Common myeloid progenitor, CD34-positive (primary cell): ENCODE measurements at regions of chr4 and their contacts with region 1.

Region 1: GRCh38 chr4:153643406-153644383 is 40.4 kb upstream of the TLR2 start:
- DNase-seq: peak; percentile 44 to 82 (median 72)
- H3K4me3 ChIP-seq: no peak overlapping the region
- H3K27ac ChIP-seq: no peak overlapping the region
- H3K4me1 ChIP-seq: peaks cover 0 to 4% (median 0%) of the 10 kb centered on the region in 4 experiments
- H3K27me3 ChIP-seq: no peaks in the 10 kb centered on the region

Region 2: DNA sequence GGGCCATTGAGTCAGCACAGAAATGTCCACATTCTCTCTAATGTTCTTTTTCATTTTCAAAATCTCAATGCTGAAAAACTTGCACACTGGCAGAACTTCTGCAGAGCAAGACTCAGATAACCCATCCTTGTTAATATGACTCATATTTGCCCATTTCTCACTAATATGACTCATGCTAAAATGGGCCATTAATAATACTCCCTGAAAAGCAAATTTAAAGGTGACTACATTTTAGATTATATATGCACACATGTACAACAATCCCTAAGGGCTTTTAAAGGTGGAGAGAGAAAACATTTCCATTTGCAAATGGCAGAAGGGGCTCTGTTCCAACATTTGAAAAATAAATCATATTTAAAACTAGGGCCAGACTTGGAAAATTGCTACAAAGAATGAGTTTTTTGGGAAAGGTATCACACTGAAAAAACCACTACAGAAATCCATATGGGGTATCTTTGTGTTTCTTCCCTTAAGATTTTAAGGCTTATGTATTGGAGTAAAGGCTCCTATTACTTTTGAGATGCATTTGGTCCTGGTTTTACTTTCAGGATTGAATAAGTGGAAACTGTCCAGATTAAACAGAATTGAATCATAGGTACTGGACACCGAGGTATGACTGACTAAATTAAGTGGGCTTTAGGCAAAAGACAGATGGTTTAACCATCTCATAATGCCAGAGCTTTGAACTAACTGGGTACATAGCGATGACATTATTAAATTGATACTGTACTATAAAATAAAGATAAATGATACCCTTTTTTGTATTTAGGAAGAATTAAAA is 70.4 kb after region 1 on chr4:
- CTCF ChIA-PET with region 1: no interaction called
- POLR2A ChIA-PET with region 1: no interaction called
- DNase-seq: no peak
- H3K4me3 ChIP-seq: no peak overlapping the region
- H3K27ac ChIP-seq: no peak overlapping the region
- H3K4me1 ChIP-seq: no peaks in the 10 kb centered on the region
- H3K27me3 ChIP-seq: no peaks in the 10 kb centered on the region

Region 3: GRCh38 chr4:153750197-153750817 is 106.6 kb after region 1 on chr4:
- CTCF ChIA-PET with region 1: interaction called, 12 read pairs
- POLR2A ChIA-PET with region 1: no interaction called
- DNase-seq: peak; percentile 65 to 83 (median 80)
- H3K4me3 ChIP-seq: no peak overlapping the region
- H3K27ac ChIP-seq: no peak overlapping the region
- H3K4me1 ChIP-seq: peaks cover 0 to 6% (median 2%) of the 10 kb centered on the region in 4 experiments
- H3K27me3 ChIP-seq: peaks cover 0 to 3% (median 0%) of the 10 kb centered on the region in 5 experiments